Left colon (tissue), 2 donors: ENCODE measurements at regions of chr13 and their contacts with region 1.

Region 1: GRCh38 chr13:21638319-21639282 is 32.3 kb upstream of the FGF9 start:
- DNase-seq: peak in 1 of 2 donors; percentile 34
- ATAC-seq: peak; percentile 39

Region 2: GRCh38 chr13:21825186-21825585 is 186.6 kb after region 1 on chr13:
- intact Hi-C with region 1: no loop called
- DNase-seq: no peak
- ATAC-seq: peak; percentile 96

Region 3: DNA sequence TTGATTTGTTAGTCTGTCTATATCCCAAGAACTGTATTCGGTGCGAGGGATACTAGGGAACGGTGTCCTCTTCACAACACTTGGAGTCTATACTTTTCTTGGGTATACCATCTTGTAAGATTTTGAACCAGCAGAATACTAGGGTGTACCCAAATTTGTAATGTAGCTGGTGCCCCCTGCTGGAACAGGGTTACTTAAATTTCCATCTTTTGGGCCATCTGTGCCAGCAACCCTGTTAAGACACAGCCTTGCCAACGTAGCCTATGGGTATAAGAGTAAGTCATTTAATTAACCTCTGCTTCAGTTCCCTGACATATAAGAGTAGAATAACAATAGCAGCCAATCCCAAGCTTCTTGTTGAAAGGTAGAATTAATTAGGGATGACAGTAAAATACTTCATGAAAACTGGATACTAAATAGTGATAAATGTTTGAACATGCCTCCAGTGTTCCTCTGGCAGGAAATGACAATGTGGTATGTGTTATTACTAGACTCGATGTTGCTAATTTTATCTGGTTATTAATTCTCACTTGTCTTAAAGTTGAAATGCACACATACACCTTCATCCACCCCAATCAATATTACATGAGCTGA is 639.8 kb after region 1 on chr13:
- intact Hi-C with region 1: loop called in 1 of 2 experiments (anchors 10 kb)
- DNase-seq: peak; percentile 34 to 81
- ATAC-seq: peak; percentile 65

Region 4: DNA sequence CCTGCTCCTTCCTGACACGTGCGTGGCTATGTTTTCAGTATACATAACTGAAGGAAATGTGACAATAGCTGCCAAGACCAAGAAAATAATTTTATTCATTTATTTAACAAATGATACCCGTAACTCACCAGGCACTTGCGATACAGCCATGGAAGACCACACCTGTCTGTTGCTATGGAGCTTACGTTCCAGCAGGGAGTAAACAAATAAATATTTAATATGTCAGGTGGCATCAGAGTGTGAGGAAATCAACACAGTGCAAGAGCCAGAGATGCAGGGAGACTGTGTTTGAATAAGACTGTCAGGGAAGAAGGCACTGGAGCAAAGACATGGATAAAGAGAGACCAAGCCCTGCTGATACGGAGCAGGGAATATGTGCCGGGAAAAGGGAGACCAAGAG is 1427.0 kb after region 1 on chr13:
- intact Hi-C with region 1: no loop called
- DNase-seq: no peak
- ATAC-seq: no peak